ENCODE measurements at regions of chr10 and their contacts with region 1.

Region 1: GRCh38 chr10:97365761-97366351 is 31.3 kb upstream of the FRAT2 start:
- DNase-seq: peak; percentile 68 to 85 (median 85)
- H3K4me3 ChIP-seq: peak overlapping the region in 3 of 7 experiments; percentile 14 to 28 (median 15)
- H3K27ac ChIP-seq: no peak overlapping the region
- H3K4me1 ChIP-seq: peaks cover 5 to 31% (median 23%) of the 10 kb centered on the region in 4 experiments
- H3K27me3 ChIP-seq: no peaks in the 10 kb centered on the region

Region 2: DNA sequence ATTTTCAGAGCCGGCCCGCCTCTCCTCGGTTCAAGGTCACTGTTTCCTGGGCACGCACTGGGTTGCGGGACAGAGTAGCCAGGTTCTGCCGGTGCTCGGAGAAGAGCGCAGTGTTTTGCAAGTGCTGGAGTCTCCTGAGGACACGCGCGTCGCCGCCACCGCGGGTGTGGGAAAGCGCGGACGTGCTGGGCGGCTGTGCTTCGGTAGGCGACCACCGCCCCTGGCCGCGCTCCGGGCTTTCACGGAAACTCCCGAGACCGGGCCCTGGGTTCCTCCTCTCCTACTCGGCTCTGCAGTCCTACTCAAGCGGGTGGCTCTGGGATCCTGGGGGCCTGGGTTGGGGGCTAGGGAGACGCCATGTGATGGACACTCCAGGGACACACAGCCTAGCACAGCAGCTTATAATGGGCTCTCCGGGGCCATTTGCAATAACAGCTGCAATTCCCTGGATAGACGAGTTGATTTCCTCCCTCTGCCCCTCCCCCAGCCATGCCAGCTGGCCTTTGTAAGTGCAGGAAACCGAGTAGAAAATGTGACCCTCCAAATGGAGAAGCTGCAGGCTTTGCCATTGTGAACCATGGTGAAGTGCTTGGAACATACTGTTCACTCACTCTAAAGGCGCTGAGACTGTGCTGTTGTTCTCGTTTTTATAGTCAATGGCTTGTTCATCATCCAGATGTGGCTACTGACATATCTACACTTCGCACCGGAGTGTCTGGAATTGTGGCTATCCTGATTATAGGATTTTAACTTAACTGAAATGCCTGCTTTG is 44.6 kb before region 1 on chr10:
- CTCF ChIA-PET with region 1: no interaction called
- POLR2A ChIA-PET with region 1: no interaction called
- DNase-seq: peak; percentile 19 to 74 (median 73)
- H3K4me3 ChIP-seq: peak overlapping the region; percentile 8 to 91 (median 78)
- H3K27ac ChIP-seq: no peak overlapping the region
- H3K4me1 ChIP-seq: peaks cover 15 to 36% (median 30%) of the 10 kb centered on the region in 4 experiments
- H3K27me3 ChIP-seq: no peaks in the 10 kb centered on the region

Region 3: GRCh38 chr10:97355571-97355975 is 10.3 kb before region 1 on chr10:
- CTCF ChIA-PET with region 1: interaction called, 13 read pairs
- POLR2A ChIA-PET with region 1: no interaction called
- DNase-seq: peak; percentile 26 to 58 (median 44)
- H3K4me3 ChIP-seq: no peak overlapping the region
- H3K27ac ChIP-seq: no peak overlapping the region
- H3K4me1 ChIP-seq: peaks cover 4 to 20% (median 18%) of the 10 kb centered on the region in 4 experiments
- H3K27me3 ChIP-seq: no peaks in the 10 kb centered on the region

Region 4: DNA sequence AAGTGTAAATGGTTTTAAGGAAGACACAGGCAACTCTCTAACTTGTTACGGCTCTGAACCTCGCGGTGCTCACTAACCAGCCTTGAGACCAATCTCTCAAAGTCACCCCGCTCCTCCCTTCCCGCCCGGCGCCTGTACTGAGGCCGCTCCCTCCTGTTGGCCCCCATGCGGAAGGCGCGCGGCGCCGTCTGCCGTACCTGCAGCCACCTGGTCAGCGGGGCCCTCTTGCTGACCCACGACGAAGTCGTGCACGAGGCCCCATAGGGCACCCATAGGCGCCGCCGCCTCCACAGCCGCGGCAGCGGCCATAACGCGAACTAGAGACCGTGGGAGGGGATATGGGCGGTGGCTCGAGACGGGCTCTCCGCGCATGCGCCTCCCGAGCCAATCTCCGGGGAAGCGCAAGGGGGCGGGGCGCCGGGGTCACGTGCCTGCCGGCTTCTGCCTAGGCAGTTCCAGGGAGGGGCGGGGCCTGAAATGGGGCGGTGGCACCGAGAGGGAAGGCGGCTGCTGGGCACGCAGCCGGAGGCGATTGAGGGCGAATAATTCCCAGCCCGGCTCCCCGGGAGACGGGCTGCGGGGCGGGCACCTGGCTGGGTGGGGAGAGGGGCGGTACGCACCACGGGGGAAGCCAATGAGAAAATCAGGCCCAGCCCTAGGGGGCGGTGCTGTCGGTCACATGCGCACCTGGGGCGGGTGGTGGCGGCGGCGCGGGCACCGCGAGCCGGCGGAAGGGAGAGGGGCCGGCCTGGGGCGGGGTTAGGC is 132.4 kb after region 1 on chr10 and contains the start of gene MMS19:
- CTCF ChIA-PET with region 1: no interaction called
- POLR2A ChIA-PET with region 1: no interaction called
- DNase-seq: peak; percentile 96 to 98 (median 98)
- H3K4me3 ChIP-seq: peak within 1 kb of the TSS; percentile 77 to 99 (median 92)
- H3K27ac ChIP-seq: peak within 1 kb of the TSS; percentile 68 to 87
- H3K4me1 ChIP-seq: peaks cover 8 to 39% (median 33%) of the 10 kb centered on the region in 4 experiments
- H3K27me3 ChIP-seq: peaks cover 8 to 27% (median 14%) of the 10 kb centered on the region in 5 experiments

Measured in common myeloid progenitor, CD34-positive (primary cell).